AG04449 (cell line): ENCODE measurements at regions of chr5 and their contacts with region 1.

Region 1: DNA sequence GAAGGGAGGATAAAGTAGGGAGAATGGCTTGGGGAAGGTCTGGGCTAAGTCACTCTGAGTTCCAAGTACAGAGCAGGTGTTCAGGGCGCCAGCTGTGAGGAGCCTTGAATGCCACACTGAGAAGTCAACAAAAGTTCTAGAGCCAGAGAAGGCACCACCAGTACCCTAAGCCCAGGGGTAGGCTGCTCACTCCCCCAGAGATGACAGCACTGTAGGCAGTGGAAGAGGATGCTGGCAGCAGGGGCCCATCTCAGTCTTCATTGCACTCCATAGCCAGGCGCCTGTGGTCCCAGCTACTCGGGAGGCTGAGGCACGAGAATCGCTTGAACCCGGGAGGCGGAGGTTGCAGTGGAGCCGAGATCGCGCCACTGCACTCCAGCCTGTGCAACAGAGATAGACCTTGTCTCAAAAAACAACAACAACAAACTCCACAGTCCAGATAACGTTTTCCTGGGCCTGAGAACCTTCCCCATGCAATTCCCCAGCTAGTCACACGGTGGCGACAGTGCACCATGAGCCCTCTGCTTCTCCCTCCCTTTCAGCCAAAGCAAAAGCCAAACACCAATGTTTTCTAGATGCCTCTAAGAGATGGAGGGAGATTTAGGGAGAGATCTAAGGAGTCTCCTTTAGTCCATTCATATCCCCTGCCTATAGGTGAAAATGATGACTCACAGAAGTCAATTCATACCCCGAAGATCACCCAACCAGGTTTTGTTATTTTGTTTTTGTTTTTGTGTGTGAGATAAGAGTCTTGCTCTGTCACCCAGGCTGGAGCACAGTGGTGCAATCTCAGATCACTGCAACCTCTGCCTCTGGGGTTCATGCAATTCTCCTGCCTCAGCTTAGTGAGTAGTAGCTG is 19.8 kb upstream of the NSD1 start:
- DNase-seq: no peak
- H3K4me3 ChIP-seq: no peak overlapping the region
- CTCF ChIP-seq: peak; percentile 97

Region 2: DNA sequence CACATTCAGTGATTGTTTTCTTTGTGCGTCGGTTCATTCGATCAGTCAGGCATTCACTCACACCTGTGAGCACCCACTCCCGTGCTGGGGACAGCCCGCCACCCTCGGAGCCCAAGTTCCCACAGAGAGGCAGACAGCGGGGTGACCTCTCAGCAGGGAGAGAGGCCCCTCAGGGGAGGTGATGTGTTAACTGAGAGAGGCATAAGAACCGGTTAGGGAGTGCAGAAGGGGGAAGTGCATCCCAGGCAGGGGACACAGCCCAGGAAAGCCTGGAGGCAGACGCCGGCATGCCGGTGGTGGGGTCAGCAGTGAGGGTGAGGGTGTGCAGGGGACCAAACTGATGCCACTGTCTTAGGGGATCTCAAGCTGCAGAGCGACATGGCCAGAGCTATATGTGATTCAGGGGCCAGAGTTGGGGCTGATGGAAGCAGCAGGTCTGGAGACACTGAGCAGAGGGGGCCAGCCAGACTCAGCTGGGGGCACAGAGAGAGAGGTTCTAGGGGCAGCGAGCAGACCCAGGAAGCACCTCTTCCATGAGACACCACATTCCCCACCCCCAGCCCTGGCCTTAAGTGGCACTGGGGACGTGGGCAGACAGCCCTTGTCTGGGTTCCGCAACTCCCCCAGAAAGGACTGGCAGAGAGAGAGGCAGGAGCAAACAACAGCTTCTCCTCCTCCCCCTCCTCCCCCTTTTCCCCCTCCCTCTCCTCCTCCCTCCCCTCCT is 250.6 kb before region 1 on chr5:
- CTCF ChIA-PET with region 1: no interaction called
- POLR2A ChIA-PET with region 1: no interaction called
- DNase-seq: no peak
- H3K4me3 ChIP-seq: no peak overlapping the region
- CTCF ChIP-seq: no peak

Region 3: GRCh38 chr5:176994460-176995121 is 119.2 kb before region 1 on chr5:
- CTCF ChIA-PET with region 1: no interaction called
- POLR2A ChIA-PET with region 1: no interaction called
- DNase-seq: no peak
- H3K4me3 ChIP-seq: no peak overlapping the region
- CTCF ChIP-seq: no peak

Region 4: DNA sequence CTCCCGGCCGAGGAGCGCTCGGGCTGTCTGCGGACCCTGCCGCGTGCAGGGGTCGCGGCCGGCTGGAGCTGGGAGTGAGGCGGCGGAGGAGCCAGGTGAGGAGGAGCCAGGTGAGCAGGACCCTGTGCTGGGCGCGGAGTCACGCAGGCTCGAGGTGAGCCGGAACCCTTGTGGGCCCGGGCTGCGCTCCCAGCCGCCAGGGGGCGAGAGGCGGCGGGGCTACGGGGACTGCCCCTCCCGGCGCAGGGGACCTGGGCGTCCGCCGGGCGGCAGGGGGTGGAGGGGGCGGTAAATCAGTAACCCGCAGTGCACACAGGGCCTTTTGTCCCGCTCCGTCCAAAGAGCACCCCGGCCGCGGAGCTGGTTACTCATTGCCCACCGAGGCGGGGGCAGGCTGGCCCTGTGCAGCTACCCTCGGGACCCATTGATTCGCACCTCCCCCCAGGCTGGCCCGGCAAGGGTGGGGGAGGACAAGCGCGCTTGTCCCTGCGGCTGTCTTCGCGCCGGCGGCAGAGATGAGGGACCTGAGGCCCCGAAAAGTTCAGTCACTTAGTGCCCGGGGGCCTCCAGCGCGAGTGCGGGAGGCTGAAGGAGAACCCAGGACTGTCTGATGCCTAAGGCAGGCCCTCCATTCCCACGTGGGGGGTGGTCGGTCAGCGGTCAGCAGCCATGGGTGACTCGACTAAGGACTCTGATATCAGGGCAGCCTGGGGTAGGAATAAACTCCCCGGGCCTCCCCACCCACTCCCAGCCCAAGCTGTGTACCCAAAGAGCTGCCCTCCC is 26.7 kb before region 1 on chr5:
- CTCF ChIA-PET with region 1: interaction called, 44 read pairs
- POLR2A ChIA-PET with region 1: no interaction called
- DNase-seq: no peak
- H3K4me3 ChIP-seq: peak overlapping the region; percentile 49
- CTCF ChIP-seq: peak; percentile 56

Region 5: GRCh38 chr5:177132136-177133090 is 18.6 kb after region 1 on chr5:
- CTCF ChIA-PET with region 1: interaction called, 55 read pairs
- POLR2A ChIA-PET with region 1: no interaction called
- DNase-seq: no peak
- H3K4me3 ChIP-seq: no peak overlapping the region
- CTCF ChIP-seq: no peak

Region 6: GRCh38 chr5:177176175-177176711 is 62.4 kb after region 1 on chr5:
- CTCF ChIA-PET with region 1: no interaction called
- POLR2A ChIA-PET with region 1: no interaction called
- DNase-seq: no peak
- H3K4me3 ChIP-seq: no peak overlapping the region
- CTCF ChIP-seq: no peak

Region 7: DNA sequence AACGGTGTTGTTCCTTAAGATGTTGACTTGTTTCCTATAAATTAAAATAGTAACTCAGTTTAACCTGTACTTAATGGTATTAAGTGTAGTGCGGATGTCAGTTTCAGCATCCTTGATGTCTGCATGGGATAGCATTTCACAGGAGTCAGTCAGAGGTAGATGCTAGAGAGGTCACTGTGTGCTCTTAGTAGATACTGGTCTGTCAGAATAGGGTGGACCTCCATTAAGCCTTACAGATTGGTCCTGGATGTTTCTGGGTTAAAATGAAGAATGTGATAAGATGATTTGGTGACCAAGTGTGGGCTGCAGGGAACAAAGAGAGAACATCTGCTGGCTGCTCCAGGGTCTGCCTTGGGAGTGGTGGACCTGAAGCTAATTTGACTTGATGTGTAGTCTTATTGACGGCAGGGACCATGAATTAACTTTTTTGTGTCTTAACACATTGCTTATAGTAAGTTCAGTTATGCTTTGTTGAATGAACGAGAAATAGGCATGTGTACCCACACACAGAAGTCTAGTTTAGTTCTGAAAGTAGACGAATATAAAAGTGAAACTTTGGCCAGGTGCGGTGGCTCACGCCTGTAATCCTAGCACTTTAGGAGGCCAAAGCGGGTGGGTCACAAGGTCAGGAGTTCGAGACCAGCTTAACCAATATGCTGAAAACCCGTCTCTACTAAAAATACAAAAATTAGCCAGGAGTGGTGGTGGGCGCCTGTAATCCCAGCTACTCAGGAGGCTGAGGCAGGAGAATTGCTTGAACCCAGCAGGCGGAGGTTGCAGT is 177.2 kb after region 1 on chr5:
- CTCF ChIA-PET with region 1: interaction called, 112 read pairs
- POLR2A ChIA-PET with region 1: no interaction called
- DNase-seq: no peak
- H3K4me3 ChIP-seq: no peak overlapping the region
- CTCF ChIP-seq: no peak

Region 8: GRCh38 chr5:177351385-177352329 is 237.9 kb after region 1 on chr5 and contains the start of gene LMAN2:
- CTCF ChIA-PET with region 1: interaction called, 10 read pairs
- POLR2A ChIA-PET with region 1: no interaction called
- DNase-seq: peak; percentile 80
- H3K4me3 ChIP-seq: peak within 1 kb of the TSS; percentile 97
- CTCF ChIP-seq: no peak

Region 9: DNA sequence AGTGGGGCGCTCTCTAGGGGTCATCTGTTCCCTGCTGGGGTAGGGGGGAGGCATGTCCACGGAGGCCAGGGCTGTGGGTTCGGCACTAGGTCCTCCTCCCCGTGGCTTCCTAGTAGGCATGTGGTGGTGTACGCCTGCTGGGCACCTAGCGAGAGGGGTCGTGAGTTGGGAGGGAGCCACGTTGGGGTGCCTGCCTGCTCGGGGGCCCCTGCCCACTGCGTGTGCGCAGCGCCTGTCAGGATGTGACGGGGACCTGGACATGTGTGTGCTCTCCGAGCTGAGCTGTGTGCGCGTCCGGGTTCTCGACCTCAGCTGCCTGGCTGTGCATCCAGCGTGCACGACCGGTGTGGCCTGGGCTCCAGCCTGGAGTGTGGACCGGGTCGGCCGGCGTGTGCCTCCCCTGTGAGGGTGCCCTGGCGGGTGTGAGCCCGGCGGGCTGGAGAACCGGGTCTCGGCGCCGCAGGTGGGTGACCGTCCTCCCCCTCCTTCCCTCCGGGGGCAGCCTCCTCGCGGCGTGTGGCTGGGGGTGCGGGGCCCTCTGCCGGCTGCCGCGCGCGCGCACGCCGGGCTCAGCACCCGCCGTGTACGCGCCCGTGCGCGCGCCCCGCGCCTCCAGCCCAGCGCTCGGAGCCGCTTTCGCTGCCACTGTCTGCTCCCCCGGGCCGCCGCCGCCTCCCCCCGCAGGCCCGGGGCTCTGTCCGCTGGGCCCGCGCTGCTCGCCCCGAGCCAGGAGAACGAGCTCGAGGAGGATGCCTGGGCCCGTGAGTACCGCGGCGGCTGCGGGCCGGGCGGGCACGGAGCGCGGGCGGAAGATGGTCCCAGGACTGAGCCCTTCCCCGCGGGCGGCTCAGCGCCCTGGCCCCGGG is 332.6 kb after region 1 on chr5 and contains the start of gene PRR7:
- CTCF ChIA-PET with region 1: interaction called, 21 read pairs
- POLR2A ChIA-PET with region 1: no interaction called
- DNase-seq: no peak
- H3K4me3 ChIP-seq: peak within 1 kb of the TSS; percentile 69
- CTCF ChIP-seq: no peak